Panc1 (cell line): ENCODE measurements at regions of chr19 and their contacts with region 1.

Region 1: DNA sequence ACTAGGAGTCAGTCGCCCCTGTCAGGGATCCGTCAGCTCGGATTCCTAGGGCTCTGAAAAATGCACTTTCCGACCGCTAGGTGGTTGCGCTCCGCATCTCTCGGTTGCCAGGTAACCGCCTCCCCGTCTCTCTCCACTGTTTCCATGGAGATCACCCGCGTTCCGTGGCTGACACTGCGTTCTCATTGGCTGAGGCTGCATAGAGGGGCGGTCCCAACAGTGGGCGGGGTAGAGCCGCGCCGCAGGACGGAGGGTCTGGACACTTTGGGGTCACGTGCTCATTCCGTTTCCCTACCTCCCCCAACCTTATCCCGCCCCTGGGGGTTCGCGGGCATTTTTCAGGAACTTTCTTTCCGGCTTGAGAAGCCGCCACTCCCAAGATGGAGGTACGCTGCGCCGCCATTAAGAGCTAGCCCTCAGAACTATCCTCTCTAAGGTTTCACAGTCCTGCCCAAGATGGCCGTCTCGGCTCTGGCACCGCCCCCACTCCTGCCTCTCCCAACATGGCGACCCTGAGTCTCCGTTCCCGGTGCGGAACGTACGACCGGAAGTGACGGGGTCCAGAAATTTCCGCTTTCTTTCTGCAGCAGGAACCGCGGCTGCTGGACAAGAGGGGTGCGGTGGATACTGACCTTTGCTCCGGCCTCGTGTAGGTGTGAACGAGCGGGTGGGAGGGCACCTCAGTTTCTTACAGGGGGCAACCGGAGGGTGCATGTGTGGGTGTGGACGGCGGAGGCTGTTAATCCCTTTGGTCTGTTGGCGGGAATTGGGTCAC is at the starts of genes ODAD3 and PRKCSH:
- DNase-seq: peak; percentile 97
- ATAC-seq: peak; percentile 98
- H3K4me3 ChIP-seq: peak within 1 kb of the TSS; percentile 89 to 91
- H3K27ac ChIP-seq: peak within 1 kb of the TSS; percentile 87
- H3K4me1 ChIP-seq: peaks cover 9% of the 10 kb centered on the region
- H3K27me3 ChIP-seq: no peaks in the 10 kb centered on the region
- CTCF ChIP-seq: peak; percentile 87
- total RNA-seq, gene ODAD3: 1.9 TPM
- total RNA-seq, gene PRKCSH: 399 TPM

Region 2: DNA sequence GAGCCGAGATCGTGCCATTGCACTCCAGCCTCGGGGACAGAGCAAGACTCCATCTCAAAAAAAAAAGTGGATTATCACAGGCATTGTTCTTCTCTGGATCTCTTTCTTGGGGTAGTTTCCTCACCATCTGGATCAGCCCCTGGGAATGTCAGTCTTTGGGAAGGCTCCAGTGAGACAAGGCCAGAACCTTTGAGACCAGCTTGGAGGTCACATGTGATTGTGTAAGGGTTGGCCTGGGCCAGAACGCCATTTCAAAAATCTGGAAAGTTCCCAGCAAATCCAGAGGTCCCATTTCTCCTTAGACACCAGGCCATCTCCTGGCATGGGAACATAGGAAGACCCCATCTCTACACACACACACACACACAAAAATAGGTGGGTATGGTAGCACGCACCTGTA is 210.1 kb before region 1 on chr19:
- CTCF ChIA-PET with region 1: interaction called, 11 read pairs
- POLR2A ChIA-PET with region 1: no interaction called
- in situ Hi-C with region 1: no loop called
- intact Hi-C with region 1: no loop called
- DNase-seq: no peak
- ATAC-seq: no peak
- H3K4me3 ChIP-seq: no peak overlapping the region
- H3K27ac ChIP-seq: no peak overlapping the region
- H3K4me1 ChIP-seq: no peaks in the 10 kb centered on the region
- H3K27me3 ChIP-seq: no peaks in the 10 kb centered on the region
- CTCF ChIP-seq: no peak